Esophagus muscularis mucosa (tissue), 4 donors: ENCODE measurements at regions of chr18 and their contacts with region 1.

Region 1: GRCh38 chr18:59402432-59403090 is 43.5 kb upstream of the LMAN1 start:
- DNase-seq: no peak
- H3K4me3 ChIP-seq: no peak overlapping the region
- H3K27ac ChIP-seq: no peak overlapping the region
- H3K4me1 ChIP-seq: no peaks in the 10 kb centered on the region
- H3K27me3 ChIP-seq: no peaks in the 10 kb centered on the region
- CTCF ChIP-seq: peak; percentile 74 to 93 (median 89)
- EP300 ChIP-seq: no peak
- POLR2A ChIP-seq: no peak

Region 2: GRCh38 chr18:59218018-59218417 is 184.5 kb before region 1 on chr18:
- intact Hi-C with region 1: no loop called
- DNase-seq: no peak
- H3K4me3 ChIP-seq: no peak overlapping the region
- H3K27ac ChIP-seq: no peak overlapping the region
- H3K4me1 ChIP-seq: peaks cover 0 to 19% (median 18%) of the 10 kb centered on the region in 4 donors
- H3K27me3 ChIP-seq: peaks cover 0 to 63% (median 12%) of the 10 kb centered on the region in 4 donors
- CTCF ChIP-seq: no peak
- EP300 ChIP-seq: no peak
- POLR2A ChIP-seq: no peak

Region 3: DNA sequence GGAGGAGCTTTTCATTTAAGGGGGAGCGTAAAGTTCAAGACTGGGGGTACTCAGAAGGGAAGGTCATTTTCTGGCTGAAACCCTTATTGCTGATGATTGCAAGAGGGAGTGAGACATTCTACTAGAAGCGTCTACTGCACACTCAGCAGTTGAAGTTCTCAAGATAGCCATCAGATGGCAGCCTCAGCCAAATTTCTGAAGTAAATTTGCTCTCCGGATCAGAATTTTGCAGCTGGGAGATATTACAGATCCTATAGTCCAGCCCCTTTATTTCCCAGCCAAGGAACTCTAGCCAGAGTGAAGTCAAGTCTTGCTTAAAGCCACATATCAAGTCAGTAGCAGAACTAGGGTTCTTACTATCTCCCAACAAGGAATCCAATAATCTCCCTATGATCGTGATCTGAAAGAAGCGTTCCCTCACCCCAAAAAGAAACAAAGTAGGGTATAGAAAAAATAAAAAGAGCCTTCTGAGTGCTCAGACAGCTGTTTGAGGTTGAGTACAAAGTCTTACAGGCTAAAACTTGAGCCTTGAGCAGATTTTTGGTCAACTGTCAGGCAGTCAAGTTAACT is 153.3 kb before region 1 on chr18:
- intact Hi-C with region 1: loop called (anchors 2 kb)
- DNase-seq: peak; percentile 88
- H3K4me3 ChIP-seq: no peak overlapping the region
- H3K27ac ChIP-seq: no peak overlapping the region
- H3K4me1 ChIP-seq: no peaks in the 10 kb centered on the region
- H3K27me3 ChIP-seq: peaks cover 0 to 28% (median 3%) of the 10 kb centered on the region in 4 donors
- CTCF ChIP-seq: peak; percentile 41 to 72 (median 57)
- EP300 ChIP-seq: no peak
- POLR2A ChIP-seq: no peak

Region 4: DNA sequence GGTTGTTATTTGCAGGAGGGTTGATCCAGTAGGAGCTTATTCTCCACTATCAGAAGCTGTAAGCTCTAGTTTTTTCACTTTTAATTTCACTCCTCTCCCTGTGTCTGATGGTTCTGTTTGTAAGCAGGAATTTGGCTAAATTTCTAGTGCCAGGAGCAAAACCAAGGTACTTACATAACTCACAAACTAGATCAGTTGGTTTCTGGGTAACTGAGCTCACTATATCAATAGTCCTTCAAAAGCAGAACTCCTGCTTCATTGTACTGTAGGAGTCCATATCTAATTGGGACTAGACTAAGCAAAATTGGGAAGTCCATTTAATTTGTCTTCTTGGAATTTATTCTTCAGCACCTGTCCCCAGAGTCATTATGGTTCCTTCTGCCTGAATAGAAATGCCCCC is 109.2 kb before region 1 on chr18:
- intact Hi-C with region 1: no loop called
- DNase-seq: peak; percentile 47
- H3K4me3 ChIP-seq: no peak overlapping the region
- H3K27ac ChIP-seq: no peak overlapping the region
- H3K4me1 ChIP-seq: no peaks in the 10 kb centered on the region
- H3K27me3 ChIP-seq: peaks cover 0 to 26% (median 0%) of the 10 kb centered on the region in 4 donors
- CTCF ChIP-seq: no peak
- EP300 ChIP-seq: no peak
- POLR2A ChIP-seq: no peak

Region 5: GRCh38 chr18:59308248-59308937 is 94.2 kb before region 1 on chr18:
- intact Hi-C with region 1: loop called (anchors 2 kb)
- DNase-seq: no peak
- H3K4me3 ChIP-seq: peak overlapping the region in 3 of 4 donors; percentile 22 to 51 (median 31)
- H3K27ac ChIP-seq: no peak overlapping the region
- H3K4me1 ChIP-seq: peaks cover 9 to 12% (median 11%) of the 10 kb centered on the region in 4 donors
- H3K27me3 ChIP-seq: peaks cover 0 to 50% (median 0%) of the 10 kb centered on the region in 4 donors
- CTCF ChIP-seq: peak; percentile 66 to 86 (median 68)
- EP300 ChIP-seq: no peak
- POLR2A ChIP-seq: no peak

Region 6: GRCh38 chr18:59340817-59341216 is 61.7 kb before region 1 on chr18:
- intact Hi-C with region 1: no loop called
- DNase-seq: no peak
- H3K4me3 ChIP-seq: no peak overlapping the region
- H3K27ac ChIP-seq: no peak overlapping the region
- H3K4me1 ChIP-seq: no peaks in the 10 kb centered on the region
- H3K27me3 ChIP-seq: no peaks in the 10 kb centered on the region
- CTCF ChIP-seq: no peak
- EP300 ChIP-seq: no peak
- POLR2A ChIP-seq: no peak

Region 7: DNA sequence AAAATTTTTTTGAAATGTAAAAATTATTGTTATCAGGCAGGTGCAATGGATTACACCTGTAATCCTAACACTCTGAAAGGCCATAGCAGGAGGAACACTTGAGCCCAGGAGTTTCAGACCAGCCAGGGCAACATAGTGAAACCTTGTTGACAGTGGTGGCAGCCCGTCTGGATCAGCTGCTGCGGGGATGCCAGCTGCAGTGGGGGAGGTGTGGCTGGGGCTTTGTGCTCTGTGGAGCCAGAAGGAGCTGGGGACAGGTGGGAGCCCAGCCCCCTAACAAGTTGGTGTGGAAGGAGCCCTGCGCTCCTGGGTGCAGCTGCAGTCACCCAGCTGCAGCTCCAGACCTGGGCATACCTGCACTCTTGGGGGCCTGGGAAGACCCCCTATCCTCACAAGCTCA is 1152.4 kb after region 1 on chr18:
- intact Hi-C with region 1: no loop called
- DNase-seq: no peak
- H3K4me3 ChIP-seq: no peak overlapping the region
- H3K27ac ChIP-seq: no peak overlapping the region
- H3K4me1 ChIP-seq: no peaks in the 10 kb centered on the region
- H3K27me3 ChIP-seq: peaks cover 0 to 6% (median 0%) of the 10 kb centered on the region in 4 donors
- CTCF ChIP-seq: no peak
- EP300 ChIP-seq: no peak
- POLR2A ChIP-seq: no peak